ENCODE measurements at regions of chr22 and their contacts with region 1.

Region 1: DNA sequence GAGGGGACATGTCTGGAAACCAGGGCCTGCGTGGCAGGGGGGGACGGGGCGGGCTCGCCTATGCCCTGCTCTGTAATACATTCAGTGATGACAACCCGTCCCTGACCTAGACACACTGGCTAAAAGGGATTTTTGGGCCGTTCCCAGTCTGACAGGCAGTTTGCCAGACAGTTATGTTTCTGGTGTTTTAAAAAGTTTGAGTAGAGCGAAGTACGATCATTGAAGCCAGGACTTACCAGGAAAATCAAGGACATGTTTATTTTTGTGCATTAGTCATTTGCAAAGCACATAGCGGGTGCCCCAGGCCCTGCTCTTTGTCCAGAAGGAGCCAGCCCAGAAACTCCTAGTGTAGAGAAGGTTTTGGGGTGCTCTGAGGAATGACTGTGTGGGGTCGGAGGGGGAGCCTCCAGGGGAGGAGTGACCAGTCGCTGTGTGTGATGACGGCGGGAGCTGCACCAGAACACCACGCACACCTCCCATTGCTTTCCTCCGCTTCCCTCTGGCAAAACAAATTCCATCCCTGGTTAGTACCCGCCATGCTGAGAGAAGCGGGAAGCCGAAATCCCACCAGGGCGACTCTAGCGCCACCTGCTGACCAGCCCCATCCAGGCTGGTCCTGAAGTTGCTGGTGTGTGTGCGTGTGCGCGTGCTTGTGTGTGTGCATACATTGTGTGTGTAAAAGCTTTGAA is 50.8 kb downstream of the FBLN1 start:
- DNase-seq: peak; percentile 83
- ATAC-seq: peak; percentile 62

Region 2: DNA sequence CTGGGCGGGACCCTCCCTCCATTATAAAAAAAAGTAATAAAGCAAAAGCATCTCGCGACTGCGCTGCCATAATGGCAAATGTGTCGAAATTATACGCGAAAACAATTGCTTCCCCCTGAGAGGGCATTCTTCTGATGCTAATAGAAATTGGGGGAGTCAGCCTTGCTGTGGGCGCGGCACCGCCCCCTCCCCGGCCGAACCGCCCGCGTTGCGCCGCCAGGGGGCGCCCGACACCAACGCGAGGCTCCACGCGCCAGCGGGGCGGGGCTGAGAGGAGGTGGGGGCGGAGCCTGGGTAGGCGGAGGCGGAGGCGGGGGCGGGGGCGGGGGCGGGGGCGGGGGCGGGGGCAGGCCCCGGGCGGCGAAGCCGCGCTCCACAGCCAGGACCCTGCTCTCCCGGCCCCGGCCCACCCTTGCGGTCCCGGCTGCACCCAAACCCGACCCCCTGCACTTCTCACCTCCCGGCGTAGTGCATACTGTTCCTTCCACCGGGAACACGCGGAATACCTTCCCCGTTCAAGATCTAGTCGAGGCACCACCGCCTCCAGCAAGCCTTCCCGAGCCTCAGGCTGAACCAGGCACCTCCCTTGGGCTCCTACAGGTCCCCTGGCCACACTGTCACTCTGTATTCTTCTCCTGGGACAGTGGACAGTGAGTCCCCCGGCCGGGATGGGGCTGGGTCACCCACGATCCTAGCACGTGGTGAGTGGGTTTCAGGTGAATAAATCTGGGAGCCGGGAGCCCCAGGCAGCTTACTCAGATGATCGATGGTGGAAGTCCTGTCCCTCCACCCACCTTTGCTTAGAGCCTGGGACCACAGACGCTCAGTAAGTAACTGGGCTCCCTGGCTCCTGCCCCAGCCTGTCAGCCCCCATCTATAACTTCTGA is 284.3 kb before region 1 on chr22:
- intact Hi-C with region 1: loop called (anchors 2 kb)
- DNase-seq: peak; percentile 96
- ATAC-seq: peak; percentile 80

Region 3: GRCh38 chr22:45366713-45367112 is 186.8 kb before region 1 on chr22:
- intact Hi-C with region 1: no loop called
- DNase-seq: no peak
- ATAC-seq: no peak

Region 4: GRCh38 chr22:45441138-45441537 is 112.4 kb before region 1 on chr22:
- intact Hi-C with region 1: loop called (anchors 1 kb)
- DNase-seq: peak; percentile 76
- ATAC-seq: peak; percentile 93

Region 5: GRCh38 chr22:45511847-45512281 is 41.6 kb before region 1 on chr22:
- intact Hi-C with region 1: loop called (anchors 5 kb)
- DNase-seq: peak; percentile 77
- ATAC-seq: peak; percentile 89

Region 6: DNA sequence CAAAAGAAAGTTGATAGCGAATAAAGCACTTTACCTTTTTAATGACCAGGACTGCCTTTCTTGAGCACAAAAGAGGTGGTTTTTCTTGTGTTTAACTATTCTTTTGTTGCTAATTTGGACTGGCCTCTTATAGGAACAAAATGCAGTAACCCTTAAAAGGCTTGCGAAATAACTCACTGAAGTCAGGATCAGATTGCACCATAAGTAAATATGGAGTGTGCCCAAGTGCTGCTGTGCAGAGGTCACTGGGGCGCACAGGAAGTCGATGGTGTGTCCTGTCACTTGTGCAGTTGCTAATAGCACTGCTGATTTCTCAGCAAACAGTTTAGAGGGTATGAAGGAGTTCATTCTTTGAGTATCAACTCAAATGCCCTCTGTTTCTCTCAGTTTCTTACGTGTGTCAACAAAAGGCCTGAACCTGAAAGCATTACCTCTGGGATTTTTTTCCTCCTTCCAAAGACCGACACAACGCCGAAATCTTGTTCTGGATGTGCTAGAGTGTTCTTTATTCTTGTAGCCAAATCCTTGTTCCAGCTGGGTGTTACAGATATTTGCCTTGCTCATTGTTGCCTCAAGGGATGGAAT is 189.5 kb after region 1 on chr22:
- intact Hi-C with region 1: no loop called
- DNase-seq: no peak
- ATAC-seq: peak; percentile 44

Measured in Right ventricle myocardium inferior (tissue), 1 donor.